ENCODE measurements at regions of chr3 and their contacts with region 1.

Region 1: GRCh38 chr3:25664810-25665314 is at the start of gene TOP2B:
- DNase-seq: peak; percentile 96 to 98 (median 97)
- H3K4me3 ChIP-seq: peak within 1 kb of the TSS; percentile 5 to 87 (median 74)
- H3K27ac ChIP-seq: peak within 1 kb of the TSS; percentile 80 to 99 (median 96)
- H3K4me1 ChIP-seq: peaks cover 20 to 40% of the 10 kb centered on the region in 2 donors
- H3K27me3 ChIP-seq: no peaks in the 10 kb centered on the region
- CTCF ChIP-seq: peak in 1 of 6 experiments; percentile 3
- POLR2A ChIP-seq: peak; percentile 81 to 95
- total RNA-seq, gene TOP2B: 49.1 to 108 (median 76.2) TPM

Region 2: GRCh38 chr3:25618028-25618427 is 46.8 kb before region 1 on chr3:
- intact Hi-C with region 1: no loop called
- DNase-seq: no peak
- H3K4me3 ChIP-seq: no peak overlapping the region
- H3K27ac ChIP-seq: no peak overlapping the region
- H3K4me1 ChIP-seq: no peaks in the 10 kb centered on the region
- H3K27me3 ChIP-seq: no peaks in the 10 kb centered on the region
- CTCF ChIP-seq: no peak
- POLR2A ChIP-seq: no peak

Region 3: DNA sequence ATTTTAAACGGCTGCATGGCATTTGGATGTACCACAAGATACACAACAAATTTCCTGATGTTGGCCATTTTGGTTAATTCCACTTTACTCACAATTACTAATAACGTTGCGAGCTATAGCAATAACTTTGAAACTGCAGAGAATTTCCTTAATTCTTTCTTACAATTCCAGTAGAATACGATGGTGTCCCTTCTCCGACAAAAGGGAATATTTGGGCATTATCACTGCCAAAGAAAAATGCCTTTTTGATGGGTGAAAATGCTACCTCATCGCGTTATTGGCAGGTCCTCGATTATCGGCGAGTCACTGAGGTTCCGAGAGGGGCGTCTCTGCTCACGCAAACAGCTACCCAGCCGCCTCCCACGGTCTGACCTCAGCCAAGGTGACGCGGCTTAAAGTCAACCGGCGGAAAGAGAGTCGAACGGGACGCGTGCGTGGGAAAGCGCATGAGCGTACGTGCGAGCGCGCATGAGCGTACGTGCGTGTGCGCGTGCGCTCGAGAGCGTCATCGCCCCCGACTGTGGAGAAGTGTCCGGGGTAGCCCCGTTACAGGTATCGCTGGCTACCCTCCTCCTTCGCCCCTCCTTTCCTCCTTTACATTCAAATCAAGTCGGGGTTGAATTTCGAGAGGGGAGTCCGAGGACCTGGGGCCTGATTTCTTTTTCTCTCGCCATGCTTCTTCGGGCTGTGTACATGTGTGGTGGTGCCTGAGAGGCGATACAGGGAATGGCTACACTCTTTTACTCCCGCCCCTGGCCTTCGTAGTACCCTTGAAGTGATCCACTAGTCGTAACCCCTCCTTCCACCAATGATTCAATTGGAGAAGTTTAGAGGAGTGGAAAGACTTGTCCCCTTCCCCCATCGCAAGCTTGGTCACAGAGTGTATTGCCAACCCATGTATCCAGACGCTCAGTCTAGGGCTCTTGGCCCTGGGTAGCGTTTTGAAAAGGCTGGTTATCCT is 125.0 kb after region 1 on chr3 and contains the start of gene OXSM:
- intact Hi-C with region 1: loop called in 1 of 2 experiments (anchors 10 kb)
- DNase-seq: peak; percentile 92 to 97 (median 94)
- H3K4me3 ChIP-seq: peak within 1 kb of the TSS; percentile 0 to 67 (median 37)
- H3K27ac ChIP-seq: peak within 1 kb of the TSS; percentile 68 to 96 (median 82)
- H3K4me1 ChIP-seq: peaks cover 0 to 14% of the 10 kb centered on the region in 2 donors
- H3K27me3 ChIP-seq: no peaks in the 10 kb centered on the region
- CTCF ChIP-seq: no peak
- POLR2A ChIP-seq: peak; percentile 71 to 93
- total RNA-seq, gene OXSM: 10.2 to 29.6 (median 14.7) TPM

Region 4: GRCh38 chr3:26049951-26050350 is 385.1 kb after region 1 on chr3:
- intact Hi-C with region 1: no loop called
- DNase-seq: no peak
- H3K4me3 ChIP-seq: no peak overlapping the region
- H3K27ac ChIP-seq: no peak overlapping the region
- H3K4me1 ChIP-seq: no peaks in the 10 kb centered on the region
- H3K27me3 ChIP-seq: no peaks in the 10 kb centered on the region
- CTCF ChIP-seq: no peak
- POLR2A ChIP-seq: no peak